CD8-positive, alpha-beta memory T cell (primary cell): ENCODE measurements at regions of chr1 and their contacts with region 1.

Region 1: DNA sequence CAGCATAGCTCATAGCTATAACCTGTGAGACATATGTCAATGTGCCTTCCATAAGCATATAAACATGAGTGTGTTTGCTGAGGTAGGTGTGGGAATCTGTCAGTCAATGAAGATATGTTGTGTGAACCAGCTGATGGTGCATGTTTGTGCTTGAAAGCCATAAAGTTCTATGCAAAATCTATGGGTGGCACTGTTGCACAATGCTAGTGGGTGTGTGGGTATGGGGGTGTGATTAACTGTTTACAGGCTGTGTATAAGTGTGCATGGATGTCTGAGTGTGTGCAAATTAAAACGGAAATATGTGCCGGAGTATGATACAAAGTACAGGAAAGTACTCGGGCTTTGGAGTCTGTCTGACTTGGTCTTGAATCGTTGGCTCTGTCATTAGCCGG is 1.0 kb upstream of the ATP2B4 start:
- DNase-seq: peak; percentile 45 to 83 (median 77)
- H3K4me3 ChIP-seq: peak overlapping the region; percentile 88
- H3K4me3 Mint-ChIP-seq: peak overlapping the region; percentile 69 to 100 (median 98)
- H3K27ac ChIP-seq: peak overlapping the region; percentile 93
- H3K27ac Mint-ChIP-seq: peak overlapping the region; percentile 81 to 99 (median 96)
- H3K4me1 ChIP-seq: peaks cover 31% of the 10 kb centered on the region
- H3K4me1 Mint-ChIP-seq: peaks cover 30 to 34% (median 33%) of the 10 kb centered on the region in 3 donors
- H3K27me3 ChIP-seq: no peaks in the 10 kb centered on the region
- H3K27me3 Mint-ChIP-seq: no peaks in the 10 kb centered on the region

Region 2: DNA sequence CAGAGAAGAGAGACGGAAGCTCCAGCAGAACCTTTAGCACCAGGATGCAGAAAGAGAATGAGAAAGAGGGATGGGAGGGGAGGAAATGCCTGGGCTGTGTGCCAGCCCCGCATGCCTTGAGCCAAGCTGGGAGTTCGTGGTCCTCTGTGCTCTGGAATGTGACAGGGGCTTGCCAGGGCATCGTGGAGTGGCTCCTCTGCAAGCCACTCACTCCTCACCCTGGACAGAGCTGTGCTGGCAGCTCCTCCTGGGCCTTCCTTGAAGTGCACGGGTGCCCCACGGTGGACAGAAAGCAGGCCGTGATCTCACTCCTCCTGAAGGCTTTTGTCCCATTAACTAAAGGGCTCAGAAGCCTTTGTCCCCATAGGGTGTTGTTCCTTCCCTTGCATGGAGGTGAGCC is 184.9 kb before region 1 on chr1:
- CTCF ChIA-PET with region 1: no interaction called
- POLR2A ChIA-PET with region 1: no interaction called
- DNase-seq: peak in 1 of 5 donors; percentile 1
- H3K4me3 ChIP-seq: no peak overlapping the region
- H3K4me3 Mint-ChIP-seq: no peak overlapping the region
- H3K27ac ChIP-seq: no peak overlapping the region
- H3K27ac Mint-ChIP-seq: no peak overlapping the region
- H3K4me1 ChIP-seq: no peaks in the 10 kb centered on the region
- H3K4me1 Mint-ChIP-seq: no peaks in the 10 kb centered on the region
- H3K27me3 ChIP-seq: no peaks in the 10 kb centered on the region
- H3K27me3 Mint-ChIP-seq: peaks cover 7 to 33% of the 10 kb centered on the region in 2 donors

Region 3: DNA sequence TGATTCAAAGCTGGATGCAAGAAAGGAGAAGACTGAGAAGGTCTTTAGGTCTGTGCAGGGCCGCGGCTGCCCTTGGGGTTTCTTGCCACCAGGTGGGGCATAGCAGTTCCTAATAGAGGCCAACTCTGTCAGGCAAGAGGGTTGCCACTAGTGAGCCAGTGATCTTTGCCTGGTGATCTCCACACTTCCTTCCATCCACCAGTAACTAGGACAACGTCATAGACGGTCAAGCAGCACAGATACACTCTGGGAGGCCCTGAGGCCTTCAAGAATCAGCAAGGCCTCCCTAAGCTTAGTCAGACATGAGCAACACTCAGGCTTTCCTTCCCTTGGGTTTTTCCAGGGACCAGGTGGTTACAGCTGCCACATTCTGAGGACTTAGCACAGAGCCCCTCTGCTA is 31.9 kb before region 1 on chr1:
- CTCF ChIA-PET with region 1: interaction called, 54 read pairs
- POLR2A ChIA-PET with region 1: no interaction called
- DNase-seq: peak; percentile 29 to 78 (median 47)
- H3K4me3 ChIP-seq: no peak overlapping the region
- H3K4me3 Mint-ChIP-seq: no peak overlapping the region
- H3K27ac ChIP-seq: no peak overlapping the region
- H3K27ac Mint-ChIP-seq: peak overlapping the region in 2 of 8 donors; percentile 30 to 74
- H3K4me1 ChIP-seq: no peaks in the 10 kb centered on the region
- H3K4me1 Mint-ChIP-seq: peaks cover 10 to 17% (median 11%) of the 10 kb centered on the region in 3 donors
- H3K27me3 ChIP-seq: no peaks in the 10 kb centered on the region
- H3K27me3 Mint-ChIP-seq: no peaks in the 10 kb centered on the region

Region 4: DNA sequence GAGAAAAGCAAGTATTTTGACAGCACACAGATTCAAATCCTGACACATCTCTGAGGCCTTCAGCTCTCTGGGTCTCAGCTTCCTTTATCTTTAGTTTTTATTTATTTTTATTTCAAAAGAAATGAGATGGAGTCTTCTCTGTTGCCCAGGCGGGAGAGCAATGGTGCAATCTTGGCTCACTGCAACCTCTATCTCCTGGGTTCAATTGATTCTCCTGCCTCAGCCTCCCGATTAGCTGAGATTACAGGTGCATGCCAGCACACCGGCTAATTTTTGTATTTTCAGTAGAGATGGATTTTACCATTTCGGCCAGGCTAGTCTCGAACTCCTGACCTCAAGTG is 18.1 kb before region 1 on chr1:
- CTCF ChIA-PET with region 1: interaction called, 36 read pairs
- POLR2A ChIA-PET with region 1: interaction called, 13 read pairs
- DNase-seq: no peak
- H3K4me3 ChIP-seq: no peak overlapping the region
- H3K4me3 Mint-ChIP-seq: peak overlapping the region in 3 of 7 donors; percentile 73 to 93 (median 81)
- H3K27ac ChIP-seq: no peak overlapping the region
- H3K27ac Mint-ChIP-seq: peak overlapping the region; percentile 82 to 100 (median 97)
- H3K4me1 ChIP-seq: peaks cover 37% of the 10 kb centered on the region
- H3K4me1 Mint-ChIP-seq: peaks cover 42 to 66% (median 65%) of the 10 kb centered on the region in 3 donors
- H3K27me3 ChIP-seq: no peaks in the 10 kb centered on the region
- H3K27me3 Mint-ChIP-seq: peaks cover 0 to 1% of the 10 kb centered on the region in 2 donors

Region 5: GRCh38 chr1:203655671-203656070 is 30.0 kb after region 1 on chr1:
- CTCF ChIA-PET with region 1: interaction called, 31 read pairs
- POLR2A ChIA-PET with region 1: interaction called, 35 read pairs
- DNase-seq: peak in 1 of 5 donors; percentile 46
- H3K4me3 ChIP-seq: no peak overlapping the region
- H3K4me3 Mint-ChIP-seq: peak overlapping the region; percentile 25 to 86 (median 66)
- H3K27ac ChIP-seq: peak overlapping the region; percentile 48
- H3K27ac Mint-ChIP-seq: peak overlapping the region; percentile 48 to 97 (median 92)
- H3K4me1 ChIP-seq: peaks cover 63% of the 10 kb centered on the region
- H3K4me1 Mint-ChIP-seq: peaks cover 63 to 76% (median 68%) of the 10 kb centered on the region in 3 donors
- H3K27me3 ChIP-seq: no peaks in the 10 kb centered on the region
- H3K27me3 Mint-ChIP-seq: no peaks in the 10 kb centered on the region

Region 6: DNA sequence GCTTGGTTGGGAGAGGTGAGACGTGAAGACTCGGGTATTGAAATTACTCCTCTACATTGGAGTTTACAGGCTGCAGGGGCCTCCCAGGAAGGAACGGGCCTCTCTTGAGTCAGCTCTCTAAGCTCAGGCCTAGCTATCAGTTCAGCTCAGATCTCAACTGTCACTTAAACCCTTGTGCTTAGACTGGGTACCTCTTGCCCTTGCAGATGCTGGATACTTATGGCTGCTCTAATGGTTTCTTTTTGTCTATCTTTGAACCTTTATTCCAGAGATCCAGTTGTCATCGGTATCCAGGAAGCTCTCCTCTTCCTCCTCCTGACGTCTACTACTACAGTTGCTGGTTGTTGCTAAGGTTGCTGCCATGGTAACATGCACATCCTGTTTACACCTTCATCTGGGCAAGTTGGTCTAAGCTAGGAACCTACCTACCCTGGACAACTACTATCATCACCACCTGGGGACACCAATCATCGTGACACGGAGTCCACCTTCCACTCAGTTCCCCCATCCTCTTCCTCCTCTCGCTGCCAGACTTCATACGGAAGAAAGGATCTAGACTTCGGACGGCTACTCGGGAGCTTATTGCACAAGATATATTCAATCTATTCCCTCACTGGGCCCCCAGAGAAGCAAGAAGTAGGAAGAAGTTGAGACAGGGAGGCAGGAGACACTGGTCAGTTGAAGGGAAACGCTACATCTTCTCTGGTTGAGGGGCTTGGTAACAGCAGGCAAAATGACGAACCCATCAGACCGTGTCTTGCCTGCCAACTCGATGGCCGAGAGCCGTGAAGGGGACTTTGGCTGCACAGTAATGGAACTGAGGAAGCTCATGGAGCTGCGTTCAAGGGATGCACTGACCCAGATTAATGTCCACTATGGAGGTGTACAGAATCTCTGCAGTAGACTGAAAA is 57.1 kb after region 1 on chr1:
- CTCF ChIA-PET with region 1: interaction called, 24 read pairs
- POLR2A ChIA-PET with region 1: interaction called, 11 read pairs
- DNase-seq: peak; percentile 38 to 86 (median 71)
- H3K4me3 ChIP-seq: peak overlapping the region; percentile 12
- H3K4me3 Mint-ChIP-seq: peak overlapping the region; percentile 32 to 75 (median 60)
- H3K27ac ChIP-seq: peak overlapping the region; percentile 82
- H3K27ac Mint-ChIP-seq: peak overlapping the region; percentile 94 to 100 (median 96)
- H3K4me1 ChIP-seq: peaks cover 39% of the 10 kb centered on the region
- H3K4me1 Mint-ChIP-seq: peaks cover 56 to 75% (median 66%) of the 10 kb centered on the region in 3 donors
- H3K27me3 ChIP-seq: no peaks in the 10 kb centered on the region
- H3K27me3 Mint-ChIP-seq: no peaks in the 10 kb centered on the region